ENCODE measurements at regions of chr6 and their contacts with region 1.

Region 1: DNA sequence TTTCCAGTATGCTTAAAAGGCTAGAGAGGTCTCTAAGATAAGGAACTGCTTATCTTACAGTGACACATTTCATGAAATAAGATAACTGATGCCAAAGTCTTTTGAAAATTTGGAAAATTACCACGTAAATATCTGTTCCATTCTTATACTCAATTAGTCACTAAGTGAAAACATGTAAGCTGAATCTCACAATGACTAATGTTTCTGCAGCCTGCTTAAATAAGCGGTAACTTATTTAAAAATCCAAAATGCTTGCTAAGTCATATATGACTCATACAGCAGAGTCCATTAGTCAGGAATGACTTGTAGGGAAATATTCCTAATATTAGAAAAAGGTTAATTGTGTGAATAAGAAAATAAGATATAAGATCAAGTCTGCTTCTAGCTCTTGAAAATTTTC is 27.8 kb upstream of the LGSN start:
- DNase-seq: no peak
- ATAC-seq: no peak
- H3K4me3 ChIP-seq: no peak overlapping the region
- H3K27ac ChIP-seq: no peak overlapping the region
- H3K4me1 ChIP-seq: no peaks in the 10 kb centered on the region
- H3K27me3 ChIP-seq: no peaks in the 10 kb centered on the region
- CTCF ChIP-seq: no peak
- POLR2A ChIP-seq: no peak

Region 2: GRCh38 chr6:63426844-63427243 is 79.2 kb after region 1 on chr6:
- in situ Hi-C with region 1: no loop called
- intact Hi-C with region 1: no loop called
- DNase-seq: no peak
- ATAC-seq: peak in 1 of 2 donors; percentile 18
- H3K4me3 ChIP-seq: no peak overlapping the region
- H3K27ac ChIP-seq: no peak overlapping the region
- H3K4me1 ChIP-seq: peaks cover 14 to 16% of the 10 kb centered on the region in 2 donors
- H3K27me3 ChIP-seq: no peaks in the 10 kb centered on the region
- CTCF ChIP-seq: no peak
- POLR2A ChIP-seq: no peak

Region 3: GRCh38 chr6:63790334-63790733 is 442.7 kb after region 1 on chr6:
- in situ Hi-C with region 1: loop called in 1 of 4 experiments (anchors 25 kb)
- intact Hi-C with region 1: no loop called
- DNase-seq: no peak
- ATAC-seq: no peak
- H3K4me3 ChIP-seq: no peak overlapping the region
- H3K27ac ChIP-seq: no peak overlapping the region
- H3K4me1 ChIP-seq: no peaks in the 10 kb centered on the region
- H3K27me3 ChIP-seq: no peaks in the 10 kb centered on the region
- CTCF ChIP-seq: no peak
- POLR2A ChIP-seq: no peak

Measured in gastrocnemius medialis (tissue), 4 donors.